ENCODE measurements at regions of chr12 and their contacts with region 1.

Region 1: DNA sequence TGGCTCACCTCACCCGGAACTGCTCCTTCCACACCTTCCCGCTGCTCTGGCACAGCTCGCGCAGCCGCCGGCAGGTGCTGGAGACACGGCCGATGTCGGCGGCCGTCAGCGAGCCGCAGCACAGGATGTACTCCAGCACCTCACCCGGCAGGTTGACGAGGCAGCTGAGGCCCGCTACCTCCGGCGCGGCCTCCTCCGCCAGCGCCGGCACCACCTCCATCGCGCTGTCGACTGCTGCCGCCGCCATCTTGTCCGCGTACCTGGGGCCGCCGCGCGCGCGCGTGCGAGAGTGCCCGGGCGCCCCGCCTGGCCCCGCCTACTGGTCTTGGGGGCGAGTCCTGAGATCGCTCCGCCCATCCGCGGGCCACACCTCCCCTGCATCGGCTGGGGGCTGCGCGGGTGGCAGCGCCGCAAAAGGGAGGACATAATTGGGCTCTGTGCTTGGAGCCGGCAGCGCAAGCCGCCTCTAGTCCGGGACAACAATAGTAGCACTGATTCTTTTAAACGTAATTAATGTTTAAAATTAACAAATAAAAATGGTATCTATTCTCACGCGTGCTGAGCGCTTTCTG is at the start of gene FBXO21:
- DNase-seq: peak; percentile 94
- H3K4me3 Mint-ChIP-seq: peak within 1 kb of the TSS; percentile 89
- H3K27ac Mint-ChIP-seq: peak within 1 kb of the TSS; percentile 73
- H3K4me1 Mint-ChIP-seq: peaks cover 26% of the 10 kb centered on the region
- H3K27me3 Mint-ChIP-seq: no peaks in the 10 kb centered on the region
- total RNA-seq, gene FBXO21: 23.3 to 23.7 TPM

Region 2: DNA sequence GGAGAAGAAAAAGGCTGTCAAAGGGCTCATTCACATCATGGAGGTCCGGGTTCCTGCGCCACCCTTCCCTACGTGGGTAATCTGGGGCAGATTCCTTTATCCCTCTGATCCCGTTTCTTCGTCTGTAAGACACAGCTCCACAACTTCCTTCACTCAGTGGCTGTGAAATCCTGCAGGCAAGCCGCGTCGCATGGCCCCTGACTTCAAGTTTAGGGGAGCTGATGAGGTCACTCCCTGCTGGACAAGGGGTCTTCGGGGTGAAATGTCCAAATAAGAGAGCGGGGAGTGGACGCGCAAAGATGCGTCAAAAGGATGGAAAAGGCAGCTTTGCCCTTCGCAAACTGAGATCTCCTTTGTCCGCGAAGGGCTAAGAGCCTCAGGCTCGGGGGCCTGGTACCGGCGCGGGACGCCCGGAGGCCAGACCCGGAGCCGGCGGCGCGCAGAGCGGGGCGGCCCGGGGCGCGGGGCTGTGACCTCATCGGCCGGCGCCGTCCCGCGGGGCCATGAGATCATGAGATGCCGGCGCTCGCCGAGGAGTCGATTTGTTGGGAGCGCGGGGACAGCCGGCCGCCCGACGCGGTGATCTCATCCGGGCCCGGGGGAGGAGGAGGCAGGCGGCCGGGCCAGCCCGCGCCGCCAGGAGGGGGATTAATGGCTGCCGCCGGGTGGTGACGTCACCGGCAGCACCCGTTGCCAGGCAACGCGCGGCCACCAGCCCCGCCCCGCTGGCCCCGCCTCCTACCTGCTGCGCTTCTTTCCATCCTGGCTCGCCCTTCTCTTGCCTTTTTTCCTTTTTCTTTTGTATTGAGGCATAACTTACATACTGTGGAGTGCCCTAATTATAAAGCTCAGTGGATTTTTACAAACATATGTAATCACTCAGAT is 371.1 kb before region 1 on chr12:
- CTCF ChIA-PET with region 1: no interaction called
- POLR2A ChIA-PET with region 1: no interaction called
- intact Hi-C with region 1: loop called (anchors 5 kb)
- DNase-seq: peak; percentile 92
- H3K4me3 Mint-ChIP-seq: peak overlapping the region; percentile 93
- H3K27ac Mint-ChIP-seq: peak overlapping the region; percentile 85
- H3K4me1 Mint-ChIP-seq: peaks cover 15% of the 10 kb centered on the region
- H3K27me3 Mint-ChIP-seq: no peaks in the 10 kb centered on the region

Region 3: GRCh38 chr12:117002051-117002817 is 188.1 kb before region 1 on chr12:
- CTCF ChIA-PET with region 1: no interaction called
- POLR2A ChIA-PET with region 1: no interaction called
- intact Hi-C with region 1: no loop called
- DNase-seq: no peak
- H3K4me3 Mint-ChIP-seq: no peak overlapping the region
- H3K27ac Mint-ChIP-seq: no peak overlapping the region
- H3K4me1 Mint-ChIP-seq: no peaks in the 10 kb centered on the region
- H3K27me3 Mint-ChIP-seq: no peaks in the 10 kb centered on the region